ENCODE measurements at regions of chr12 and their contacts with region 1.

Region 1: DNA sequence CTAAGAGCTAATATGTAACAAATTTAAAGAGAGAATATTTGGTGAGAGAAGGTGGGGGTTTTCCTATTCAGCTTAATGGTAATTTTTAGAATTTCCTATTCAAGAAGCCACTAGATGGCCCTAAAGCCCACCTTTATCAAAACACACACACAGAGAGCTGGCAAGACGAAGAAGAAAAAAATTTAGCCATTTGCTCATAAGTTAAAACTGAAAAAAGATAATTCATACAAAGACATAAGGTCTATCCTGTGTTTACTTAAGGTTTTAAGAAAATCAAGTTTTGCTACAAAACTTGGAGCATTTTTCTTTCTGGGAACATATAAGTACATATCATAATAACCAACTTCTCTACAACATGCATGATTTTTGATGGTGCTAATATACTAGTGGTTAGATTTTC is 46.8 kb upstream of the PCED1B start:
- DNase-seq: no peak
- H3K4me3 ChIP-seq: no peak overlapping the region
- H3K27ac ChIP-seq: no peak overlapping the region
- H3K4me1 ChIP-seq: no peaks in the 10 kb centered on the region
- H3K27me3 ChIP-seq: no peaks in the 10 kb centered on the region
- CTCF ChIP-seq: peak; percentile 35

Region 2: GRCh38 chr12:47079468-47079980 is 46.9 kb after region 1 on chr12 and contains the starts of genes AMIGO2 and PCED1B:
- intact Hi-C with region 1: loop called (anchors 5 kb)
- DNase-seq: peak; percentile 76
- H3K4me3 ChIP-seq: peak within 1 kb of the TSS; percentile 55
- H3K27ac ChIP-seq: peak within 1 kb of the TSS; percentile 77
- H3K4me1 ChIP-seq: no peaks in the 10 kb centered on the region
- H3K27me3 ChIP-seq: peaks cover 9% of the 10 kb centered on the region
- CTCF ChIP-seq: no peak
- total RNA-seq, gene AMIGO2: 2.0 to 11.1 TPM
- total RNA-seq, gene PCED1B: 1.8 to 2.1 TPM

Region 3: DNA sequence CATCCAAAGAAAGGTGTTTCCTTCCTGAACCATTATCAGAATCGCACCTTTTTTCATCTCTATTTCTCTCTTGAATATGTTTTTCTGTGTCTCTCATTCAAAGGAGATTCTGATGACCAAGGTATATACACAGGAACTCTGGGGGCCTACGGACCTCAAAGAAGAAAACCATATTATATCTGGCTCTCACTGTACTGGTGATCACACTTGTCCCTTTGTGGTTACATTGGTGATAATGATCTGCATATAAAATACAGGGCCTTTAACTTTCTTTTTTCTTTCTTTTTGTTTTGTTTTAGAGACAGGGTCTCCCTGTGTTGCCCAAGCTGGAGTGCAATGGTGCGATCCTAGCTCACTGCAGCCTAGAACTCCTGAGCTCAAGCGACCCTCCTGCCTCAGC is 232.3 kb after region 1 on chr12:
- intact Hi-C with region 1: no loop called
- DNase-seq: no peak
- H3K4me3 ChIP-seq: no peak overlapping the region
- H3K27ac ChIP-seq: no peak overlapping the region
- H3K4me1 ChIP-seq: no peaks in the 10 kb centered on the region
- H3K27me3 ChIP-seq: no peaks in the 10 kb centered on the region
- CTCF ChIP-seq: no peak

Region 4: DNA sequence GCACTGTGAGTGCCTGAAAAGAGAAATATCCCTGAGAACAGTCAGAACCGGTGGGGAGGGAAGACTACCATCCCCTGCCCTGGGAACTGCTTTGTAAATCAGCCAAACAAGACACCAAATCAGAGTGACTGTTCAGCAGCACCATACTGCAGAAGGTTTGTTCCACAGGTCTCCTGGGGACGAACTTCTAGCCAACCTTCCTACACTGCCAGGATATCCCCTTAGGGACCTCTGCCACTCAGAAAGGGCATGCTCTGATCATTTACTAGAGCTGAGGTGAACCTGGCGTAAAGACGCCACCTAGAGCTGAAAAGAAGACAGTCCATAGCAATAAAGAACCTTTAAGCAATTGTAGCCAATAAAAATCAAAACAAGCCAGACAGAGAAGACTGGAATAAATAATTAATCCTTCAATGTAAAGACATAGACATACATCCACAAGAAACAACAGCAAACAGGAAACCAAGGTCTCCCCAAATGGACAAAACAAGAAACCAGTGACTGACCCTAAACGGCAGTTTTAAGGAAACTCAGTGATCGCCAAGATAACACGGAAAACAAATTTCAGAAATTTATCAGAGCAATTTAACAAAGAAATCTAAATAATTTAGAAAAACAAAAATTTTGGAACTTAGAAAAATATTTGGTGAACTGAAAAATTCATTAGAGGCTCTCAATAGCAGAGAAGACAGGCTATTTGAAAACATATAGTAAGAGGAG is 275.2 kb after region 1 on chr12:
- intact Hi-C with region 1: loop called (anchors 5 kb)
- DNase-seq: peak; percentile 36
- H3K4me3 ChIP-seq: no peak overlapping the region
- H3K27ac ChIP-seq: no peak overlapping the region
- H3K4me1 ChIP-seq: no peaks in the 10 kb centered on the region
- H3K27me3 ChIP-seq: no peaks in the 10 kb centered on the region
- CTCF ChIP-seq: peak; percentile 50

Region 5: GRCh38 chr12:47397664-47398281 is 365.1 kb after region 1 on chr12:
- intact Hi-C with region 1: loop called (anchors 5 kb)
- DNase-seq: no peak
- H3K4me3 ChIP-seq: no peak overlapping the region
- H3K27ac ChIP-seq: no peak overlapping the region
- H3K4me1 ChIP-seq: no peaks in the 10 kb centered on the region
- H3K27me3 ChIP-seq: no peaks in the 10 kb centered on the region
- CTCF ChIP-seq: no peak

Region 6: GRCh38 chr12:47651368-47652254 is 619.0 kb after region 1 on chr12:
- intact Hi-C with region 1: loop called (anchors 10 kb)
- DNase-seq: peak; percentile 46
- H3K4me3 ChIP-seq: peak overlapping the region; percentile 18
- H3K27ac ChIP-seq: no peak overlapping the region
- H3K4me1 ChIP-seq: no peaks in the 10 kb centered on the region
- H3K27me3 ChIP-seq: no peaks in the 10 kb centered on the region
- CTCF ChIP-seq: peak; percentile 77

Region 7: DNA sequence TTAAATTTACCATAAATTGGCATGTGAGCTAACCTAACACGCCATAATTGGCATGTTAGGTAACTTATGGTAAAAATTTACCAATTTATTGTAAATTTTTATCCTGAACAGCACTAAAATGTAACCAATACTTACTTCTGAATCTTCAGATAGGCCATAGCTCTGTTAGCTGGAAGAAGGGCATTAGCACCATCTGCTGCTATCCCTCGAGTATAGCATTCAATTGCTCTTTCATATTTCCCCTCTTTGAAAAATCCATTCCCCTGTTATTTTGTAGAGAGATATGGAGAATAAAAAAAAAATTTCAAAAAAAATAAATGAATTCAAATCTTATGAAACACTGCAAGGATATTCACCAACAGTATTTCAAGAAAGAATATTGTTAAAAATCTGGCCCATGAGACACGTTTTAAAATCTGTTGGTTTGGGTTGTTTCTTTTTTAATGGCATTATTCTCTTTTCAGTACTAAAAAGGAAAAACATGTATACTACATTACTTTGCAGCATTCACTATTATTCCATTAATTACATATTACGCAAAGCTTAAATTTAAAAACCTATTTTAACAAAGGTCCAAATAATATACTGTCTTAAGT is 654.1 kb after region 1 on chr12:
- intact Hi-C with region 1: loop called (anchors 10 kb)
- DNase-seq: no peak
- H3K4me3 ChIP-seq: no peak overlapping the region
- H3K27ac ChIP-seq: no peak overlapping the region
- H3K4me1 ChIP-seq: no peaks in the 10 kb centered on the region
- H3K27me3 ChIP-seq: no peaks in the 10 kb centered on the region
- CTCF ChIP-seq: peak; percentile 37

Measured in colonic mucosa (tissue), 4 donors.